Psoas muscle (tissue), 8 donors: ENCODE measurements at regions of chr16 and their contacts with region 1.

Region 1: GRCh38 chr16:31458844-31459721 is at the start of gene ARMC5:
- DNase-seq: peak; percentile 97 to 99
- ATAC-seq: peak; percentile 78 to 85 (median 82)
- H3K4me3 ChIP-seq: peak within 1 kb of the TSS; percentile 98
- H3K27ac ChIP-seq: peak within 1 kb of the TSS; percentile 100
- H3K4me1 ChIP-seq: peaks cover 54% of the 10 kb centered on the region
- H3K27me3 ChIP-seq: no peaks in the 10 kb centered on the region
- CTCF ChIP-seq: peak; percentile 65
- total RNA-seq, gene ARMC5: 10.1 to 18.7 (median 13.1) TPM

Region 2: DNA sequence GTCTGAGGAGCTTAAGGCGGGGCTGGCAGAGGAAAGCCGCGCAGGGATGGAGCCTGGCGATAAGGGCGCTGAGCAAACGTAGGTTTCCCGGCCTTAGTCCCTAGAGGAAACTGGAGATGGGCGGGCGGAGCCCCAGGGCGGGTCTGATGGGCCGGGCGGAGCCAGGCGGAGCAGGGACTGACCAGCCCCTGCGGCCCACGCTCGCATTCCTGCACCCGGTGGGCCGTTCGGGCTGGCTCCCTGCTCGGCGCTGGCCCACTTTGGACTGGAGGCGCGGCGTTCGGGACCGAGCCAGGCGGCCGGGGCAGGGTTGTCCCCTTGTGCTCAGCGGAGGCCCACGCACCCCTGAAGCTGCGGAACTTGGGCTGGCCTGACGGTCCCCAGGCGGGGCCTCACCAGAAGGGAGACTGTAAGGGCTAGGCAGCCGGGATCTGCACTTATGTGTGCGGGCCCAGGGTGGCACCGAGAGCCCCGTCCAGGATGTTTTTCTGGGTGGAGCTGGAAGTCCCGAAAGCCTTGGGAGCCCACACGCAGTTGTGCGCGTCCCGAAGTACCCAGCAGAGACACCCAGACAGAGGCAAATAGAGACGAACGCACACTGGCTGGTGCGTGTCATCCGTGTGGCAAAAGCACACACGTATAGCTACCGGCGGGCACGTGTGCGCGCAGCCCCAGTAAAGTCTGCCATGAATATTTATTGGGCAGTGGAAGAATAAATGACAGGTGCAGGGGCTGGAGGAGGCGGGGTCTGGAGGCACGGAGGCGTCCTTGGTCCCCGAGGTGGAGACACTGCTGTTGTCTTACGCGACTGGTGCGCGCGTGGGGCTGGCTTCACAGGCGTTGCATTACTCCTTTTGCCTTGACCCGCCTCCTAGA is 243.6 kb before region 1 on chr16:
- intact Hi-C with region 1: loop called in 1 of 2 experiments (anchors 10 kb)
- DNase-seq: peak; percentile 76 to 89
- ATAC-seq: peak; percentile 68 to 76 (median 73)
- H3K4me3 ChIP-seq: peak overlapping the region; percentile 89
- H3K27ac ChIP-seq: peak overlapping the region; percentile 99
- H3K4me1 ChIP-seq: peaks cover 52% of the 10 kb centered on the region
- H3K27me3 ChIP-seq: no peaks in the 10 kb centered on the region
- CTCF ChIP-seq: no peak

Region 3: GRCh38 chr16:31371619-31372484 is 87.2 kb before region 1 on chr16:
- intact Hi-C with region 1: no loop called
- DNase-seq: peak in 1 of 2 donors; percentile 37
- ATAC-seq: no peak
- H3K4me3 ChIP-seq: no peak overlapping the region
- H3K27ac ChIP-seq: no peak overlapping the region
- H3K4me1 ChIP-seq: no peaks in the 10 kb centered on the region
- H3K27me3 ChIP-seq: no peaks in the 10 kb centered on the region
- CTCF ChIP-seq: no peak

Region 4: DNA sequence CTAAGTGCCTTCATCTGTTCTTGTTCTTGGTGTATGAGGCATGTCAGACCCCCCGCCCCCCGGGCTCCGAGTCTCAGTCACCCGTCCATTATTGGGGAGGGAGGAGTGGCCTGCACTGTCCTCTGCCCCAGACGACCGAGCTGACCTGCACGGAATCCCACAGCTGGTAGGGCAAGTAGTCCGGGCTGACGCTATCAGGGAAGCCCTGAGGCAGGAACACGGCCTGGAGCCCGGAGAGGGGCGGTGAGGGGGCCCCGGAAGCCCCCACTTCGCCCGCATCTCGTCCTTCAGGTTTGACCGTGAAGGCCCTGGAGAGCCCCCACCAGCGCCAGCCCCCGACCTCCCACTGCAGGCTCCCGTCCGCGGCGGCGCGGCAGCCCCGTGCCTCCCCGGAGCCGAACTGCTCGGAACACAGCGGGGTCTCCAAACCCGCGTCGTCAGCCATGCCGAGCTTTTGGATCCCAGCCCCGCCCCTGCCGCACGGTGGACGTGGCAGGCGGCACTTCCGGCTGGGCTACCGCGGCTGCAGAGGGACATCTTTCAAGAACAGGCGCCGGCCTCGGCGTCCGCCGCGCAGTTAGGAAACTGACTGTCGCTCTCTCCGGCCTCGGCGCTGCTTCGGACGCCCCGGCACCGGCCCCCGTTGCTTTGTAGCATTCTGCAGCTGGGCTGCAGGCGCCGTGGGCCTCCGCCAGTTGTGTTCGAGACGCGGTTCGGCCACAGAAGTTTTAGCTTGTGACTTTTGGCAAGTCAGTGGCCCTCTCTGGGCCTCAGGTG is 49.0 kb after region 1 on chr16 and contains the start of gene RUSF1:
- intact Hi-C with region 1: loop called in 1 of 2 experiments (anchors 2 kb)
- DNase-seq: peak; percentile 92 to 96
- ATAC-seq: peak; percentile 97 to 99 (median 98)
- H3K4me3 ChIP-seq: peak within 1 kb of the TSS; percentile 92
- H3K27ac ChIP-seq: peak within 1 kb of the TSS; percentile 96
- H3K4me1 ChIP-seq: peaks cover 21% of the 10 kb centered on the region
- H3K27me3 ChIP-seq: no peaks in the 10 kb centered on the region
- CTCF ChIP-seq: no peak
- total RNA-seq, gene RUSF1: 6.9 to 16.2 (median 11.9) TPM

Region 5: DNA sequence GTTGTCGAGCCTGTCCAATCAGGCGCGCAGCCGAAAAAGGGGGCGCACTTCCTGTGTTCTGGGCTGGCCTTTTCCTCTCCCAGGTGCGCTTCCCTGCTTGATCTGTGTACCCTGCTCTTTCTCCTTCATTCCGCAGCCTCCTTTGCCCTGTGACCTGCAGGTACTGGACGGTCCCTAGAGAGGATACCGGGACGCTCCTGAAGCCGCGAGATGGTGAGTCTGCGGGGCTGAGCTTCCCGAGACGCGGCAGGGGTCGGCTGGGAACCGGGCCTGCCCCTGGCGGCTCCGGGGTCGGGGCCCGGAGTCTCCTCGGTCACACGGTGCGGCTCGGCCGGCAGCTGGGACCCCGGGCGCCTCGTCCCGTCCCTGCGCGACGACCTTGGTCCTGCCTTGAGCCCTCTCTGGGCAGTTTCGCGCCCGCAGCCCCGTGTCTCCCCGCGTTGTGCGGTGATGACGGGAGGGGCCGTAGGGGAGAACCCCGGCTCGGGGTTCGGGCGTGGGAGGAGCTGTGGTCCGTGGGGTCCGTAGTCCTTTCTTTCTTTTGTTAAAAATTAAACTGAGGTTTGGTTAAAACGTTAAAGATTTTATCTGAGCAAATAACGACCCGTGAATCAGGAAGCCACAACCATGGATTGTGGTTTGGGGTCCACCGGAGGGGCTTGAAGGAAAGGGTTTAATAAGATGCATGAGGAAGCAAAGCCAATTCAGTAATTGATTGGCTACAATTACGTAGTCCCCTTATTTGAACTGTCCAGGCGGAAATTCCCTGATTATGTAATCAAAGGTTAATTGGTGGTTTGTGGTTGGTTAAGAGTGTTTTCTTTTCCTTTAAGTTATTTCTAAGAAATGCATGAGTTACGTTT is 241.7 kb after region 1 on chr16:
- intact Hi-C with region 1: loop called in 1 of 2 experiments (anchors 10 kb)
- DNase-seq: peak; percentile 78 to 79
- ATAC-seq: peak; percentile 23 to 95 (median 35)
- H3K4me3 ChIP-seq: peak overlapping the region; percentile 84
- H3K27ac ChIP-seq: no peak overlapping the region
- H3K4me1 ChIP-seq: peaks cover 4% of the 10 kb centered on the region
- H3K27me3 ChIP-seq: peaks cover 0 to 4% (median 0%) of the 10 kb centered on the region in 3 donors
- CTCF ChIP-seq: no peak

Region 6: GRCh38 chr16:31868691-31869167 is 409.6 kb after region 1 on chr16:
- intact Hi-C with region 1: loop called in 1 of 2 experiments (anchors 10 kb)
- DNase-seq: peak; percentile 71 to 83
- ATAC-seq: peak; percentile 61 to 78 (median 66)
- H3K4me3 ChIP-seq: no peak overlapping the region
- H3K27ac ChIP-seq: no peak overlapping the region
- H3K4me1 ChIP-seq: no peaks in the 10 kb centered on the region
- H3K27me3 ChIP-seq: no peaks in the 10 kb centered on the region
- CTCF ChIP-seq: peak; percentile 88